Activated CD8-positive, alpha-beta T cell treated with anti-CD3 and anti-CD28 coated beads for 36 hours (primary cell): ENCODE measurements at regions of chr3 and their contacts with region 1.

Region 1: DNA sequence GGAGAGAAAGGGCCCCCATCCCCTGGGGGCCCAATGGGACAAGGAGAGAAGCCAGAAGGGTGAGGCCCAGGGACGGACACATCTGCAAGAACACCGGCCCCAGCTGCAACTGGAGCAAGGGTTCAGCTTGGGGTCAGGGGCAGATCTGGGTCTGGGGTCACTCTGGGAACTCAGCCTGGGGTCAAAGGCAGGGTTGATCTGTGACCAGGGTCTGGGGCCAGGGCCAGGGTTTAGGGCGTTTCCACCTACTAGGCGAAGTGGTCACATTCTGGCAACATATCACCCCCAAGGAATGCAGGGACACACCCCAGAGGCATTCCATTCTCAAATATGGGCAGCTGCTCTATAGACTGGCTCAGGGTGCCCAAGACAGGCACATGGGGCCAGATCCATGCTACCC is 9.0 kb downstream of the UROC1 start:
- DNase-seq: no peak
- ATAC-seq: no peak
- H3K4me3 Mint-ChIP-seq: no peak overlapping the region
- H3K27ac Mint-ChIP-seq: no peak overlapping the region
- H3K4me1 Mint-ChIP-seq: no peaks in the 10 kb centered on the region
- H3K27me3 Mint-ChIP-seq: peaks cover 1% of the 10 kb centered on the region
- CTCF ChIP-seq: no peak

Region 2: GRCh38 chr3:126522363-126522788 is 13.8 kb after region 1 on chr3:
- CTCF ChIA-PET with region 1: interaction called, 19 read pairs
- POLR2A ChIA-PET with region 1: no interaction called
- intact Hi-C with region 1: no loop called
- DNase-seq: peak; percentile 47
- ATAC-seq: peak; percentile 35
- H3K4me3 Mint-ChIP-seq: no peak overlapping the region
- H3K27ac Mint-ChIP-seq: no peak overlapping the region
- H3K4me1 Mint-ChIP-seq: no peaks in the 10 kb centered on the region
- H3K27me3 Mint-ChIP-seq: peaks cover 11% of the 10 kb centered on the region
- CTCF ChIP-seq: peak; percentile 94